ENCODE measurements at regions of chr3 and their contacts with region 1.

Region 1: DNA sequence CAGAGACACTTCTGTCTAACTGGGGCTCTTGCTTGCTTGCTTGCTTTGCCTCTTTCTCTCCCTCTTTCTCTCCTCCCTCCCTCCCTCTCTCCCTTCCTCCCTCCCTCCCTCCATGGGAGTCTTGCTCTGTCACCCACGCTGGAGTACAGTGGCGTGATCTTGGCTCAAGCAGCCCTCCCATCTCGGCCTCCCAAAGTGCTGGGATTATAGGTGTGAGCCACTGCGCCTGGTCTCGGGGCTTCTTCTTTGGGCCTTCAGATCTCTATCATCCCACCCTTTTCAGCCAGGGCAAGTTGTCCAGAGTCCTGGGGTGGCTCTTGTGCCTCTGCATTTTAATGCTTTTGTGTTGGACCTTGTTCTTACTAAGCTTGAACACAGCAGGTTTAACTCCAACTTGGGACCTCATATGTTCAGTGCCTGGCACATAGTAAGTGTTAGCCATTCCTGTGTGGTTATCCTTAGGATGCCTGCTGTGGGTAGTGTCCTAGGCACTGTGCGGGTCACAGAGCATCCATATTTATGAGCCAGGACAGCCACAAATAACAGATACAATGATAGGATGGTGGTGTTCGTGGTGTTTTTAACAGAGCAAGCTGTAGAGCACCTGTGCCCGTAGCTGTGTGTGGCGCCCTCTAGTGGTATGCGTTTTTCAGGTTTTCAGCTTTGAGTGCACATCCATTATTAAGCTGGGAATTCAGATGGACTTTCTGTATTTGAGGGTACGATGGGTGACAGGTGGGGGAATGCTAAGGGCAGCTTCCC is 75.1 kb downstream of the CCK start:
- DNase-seq: peak; percentile 62
- CTCF ChIP-seq: peak; percentile 77

Region 2: GRCh38 chr3:42118762-42119361 is 72.0 kb before region 1 on chr3:
- CTCF ChIA-PET with region 1: interaction called, 55 read pairs
- POLR2A ChIA-PET with region 1: interaction called, 3 read pairs
- DNase-seq: peak; percentile 83
- CTCF ChIP-seq: peak; percentile 65

Region 3: GRCh38 chr3:42134877-42135464 is 55.9 kb before region 1 on chr3:
- CTCF ChIA-PET with region 1: interaction called, 24 read pairs
- POLR2A ChIA-PET with region 1: no interaction called
- DNase-seq: no peak
- CTCF ChIP-seq: no peak

Region 4: GRCh38 chr3:42159706-42160472 is 31.0 kb before region 1 on chr3:
- CTCF ChIA-PET with region 1: interaction called, 34 read pairs
- POLR2A ChIA-PET with region 1: no interaction called
- DNase-seq: peak; percentile 65
- CTCF ChIP-seq: no peak

Region 5: DNA sequence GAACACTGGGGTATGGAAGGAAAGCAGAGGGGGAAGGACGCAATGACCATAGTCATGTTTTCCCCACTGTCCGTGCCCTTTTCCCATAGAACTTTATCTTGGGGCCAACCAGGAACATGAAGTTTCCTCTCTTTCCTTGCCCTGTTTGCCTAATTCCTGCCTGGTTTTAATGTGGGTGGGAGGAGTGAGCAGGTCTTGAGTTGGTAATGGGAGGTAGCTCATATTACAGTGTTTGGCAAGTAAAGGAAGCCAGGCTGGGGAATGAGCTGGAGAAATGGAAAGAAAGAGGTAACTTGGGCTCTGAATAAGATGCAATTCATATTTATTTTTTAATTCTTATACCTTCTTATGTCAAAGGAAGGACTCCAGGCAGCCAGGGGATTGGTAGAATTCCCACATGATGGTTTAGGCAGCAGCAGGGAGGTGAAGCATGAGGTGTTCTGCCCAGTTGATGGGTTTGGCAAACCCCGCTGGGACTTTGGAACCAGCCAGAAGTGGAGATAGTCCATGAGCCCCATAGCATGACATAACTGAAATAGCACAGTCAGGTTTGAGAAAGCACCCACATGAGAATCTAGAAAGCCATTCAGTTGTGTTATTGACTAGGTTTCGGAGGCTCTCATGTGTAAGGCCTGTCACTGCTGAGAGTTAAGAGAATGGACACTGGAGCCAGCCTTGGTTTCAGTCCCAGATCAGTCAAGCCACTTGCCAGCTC is 15.1 kb after region 1 on chr3:
- CTCF ChIA-PET with region 1: interaction called, 37 read pairs
- POLR2A ChIA-PET with region 1: no interaction called
- DNase-seq: peak; percentile 54
- CTCF ChIP-seq: no peak

Region 6: GRCh38 chr3:42220436-42221121 is 29.7 kb after region 1 on chr3:
- CTCF ChIA-PET with region 1: interaction called, 30 read pairs
- POLR2A ChIA-PET with region 1: interaction called, 6 read pairs
- DNase-seq: no peak
- CTCF ChIP-seq: no peak

Region 7: DNA sequence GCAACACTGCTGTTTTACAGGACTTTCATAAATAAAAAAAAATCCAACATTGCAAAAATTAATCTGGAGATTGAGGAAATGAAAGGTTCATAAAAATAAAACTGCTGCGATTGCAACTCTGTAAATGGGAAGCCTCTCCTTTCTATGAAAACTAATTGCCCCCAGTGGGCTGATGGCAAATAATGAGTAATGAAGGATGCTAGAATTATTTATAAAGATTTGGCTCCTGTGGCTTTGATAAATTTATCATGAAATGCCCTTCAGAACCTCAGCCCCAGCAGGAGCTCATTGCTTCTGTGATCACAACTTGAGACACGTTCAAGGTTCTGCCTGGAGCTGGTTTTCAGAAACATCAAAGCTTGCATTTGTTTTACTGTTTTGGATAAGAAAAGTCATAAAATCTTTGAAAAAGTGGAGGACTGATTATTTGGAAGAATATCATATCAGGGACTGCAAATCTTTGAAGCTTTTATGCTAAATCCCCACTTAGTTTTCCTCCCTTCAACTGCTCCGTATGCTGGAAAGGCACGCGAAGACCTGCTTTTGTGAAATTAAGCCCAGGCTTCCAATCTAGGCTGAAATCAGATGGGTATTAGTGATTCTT is 244.0 kb after region 1 on chr3:
- CTCF ChIA-PET with region 1: no interaction called
- POLR2A ChIA-PET with region 1: no interaction called
- DNase-seq: no peak
- CTCF ChIP-seq: no peak

Measured in GM10248 (cell line).